Mucosa of descending colon (tissue), 3 donors: ENCODE measurements at regions of chr5 and their contacts with region 1.

Region 1: GRCh38 chr5:168219515-168220410 is 71.7 kb upstream of the WWC1 start:
- DNase-seq: peak in 1 of 3 donors; percentile 87
- ATAC-seq: peak; percentile 85
- H3K4me3 ChIP-seq: no peak overlapping the region
- H3K4me1 ChIP-seq: peaks cover 2% of the 10 kb centered on the region
- CTCF ChIP-seq: peak; percentile 86

Region 2: GRCh38 chr5:168114444-168115017 is 105.2 kb before region 1 on chr5:
- intact Hi-C with region 1: loop called in 1 of 2 experiments (anchors 2 kb)
- DNase-seq: peak; percentile 65 to 89 (median 87)
- ATAC-seq: peak; percentile 99
- H3K4me3 ChIP-seq: no peak overlapping the region
- H3K4me1 ChIP-seq: no peaks in the 10 kb centered on the region
- CTCF ChIP-seq: peak; percentile 67